Common myeloid progenitor, CD34-positive (primary cell): ENCODE measurements at regions of chr14 and their contacts with region 1.

Region 1: GRCh38 chr14:106318700-106319099 is 792.3 kb downstream of the TMEM121 start:
- DNase-seq: peak; percentile 52 to 82 (median 75)
- H3K4me3 ChIP-seq: no peak overlapping the region
- H3K27ac ChIP-seq: no peak overlapping the region
- H3K4me1 ChIP-seq: peaks cover 0 to 7% (median 3%) of the 10 kb centered on the region in 4 experiments
- H3K27me3 ChIP-seq: peaks cover 0 to 3% (median 0%) of the 10 kb centered on the region in 5 experiments

Region 2: GRCh38 chr14:106062502-106063272 is 256.0 kb before region 1 on chr14:
- CTCF ChIA-PET with region 1: no interaction called
- POLR2A ChIA-PET with region 1: no interaction called
- DNase-seq: peak; percentile 57 to 94 (median 92)
- H3K4me3 ChIP-seq: no peak overlapping the region
- H3K27ac ChIP-seq: no peak overlapping the region
- H3K4me1 ChIP-seq: peaks cover 0 to 26% (median 15%) of the 10 kb centered on the region in 4 experiments
- H3K27me3 ChIP-seq: peaks cover 0 to 17% (median 0%) of the 10 kb centered on the region in 5 experiments

Region 3: GRCh38 chr14:106134886-106135285 is 183.8 kb before region 1 on chr14:
- CTCF ChIA-PET with region 1: no interaction called
- POLR2A ChIA-PET with region 1: no interaction called
- DNase-seq: peak in 2 of 3 donors; percentile 48 to 70
- H3K4me3 ChIP-seq: no peak overlapping the region
- H3K27ac ChIP-seq: no peak overlapping the region
- H3K4me1 ChIP-seq: peaks cover 0 to 5% (median under 1%) of the 10 kb centered on the region in 4 experiments
- H3K27me3 ChIP-seq: peaks cover 0 to 16% (median 0%) of the 10 kb centered on the region in 5 experiments

Region 4: DNA sequence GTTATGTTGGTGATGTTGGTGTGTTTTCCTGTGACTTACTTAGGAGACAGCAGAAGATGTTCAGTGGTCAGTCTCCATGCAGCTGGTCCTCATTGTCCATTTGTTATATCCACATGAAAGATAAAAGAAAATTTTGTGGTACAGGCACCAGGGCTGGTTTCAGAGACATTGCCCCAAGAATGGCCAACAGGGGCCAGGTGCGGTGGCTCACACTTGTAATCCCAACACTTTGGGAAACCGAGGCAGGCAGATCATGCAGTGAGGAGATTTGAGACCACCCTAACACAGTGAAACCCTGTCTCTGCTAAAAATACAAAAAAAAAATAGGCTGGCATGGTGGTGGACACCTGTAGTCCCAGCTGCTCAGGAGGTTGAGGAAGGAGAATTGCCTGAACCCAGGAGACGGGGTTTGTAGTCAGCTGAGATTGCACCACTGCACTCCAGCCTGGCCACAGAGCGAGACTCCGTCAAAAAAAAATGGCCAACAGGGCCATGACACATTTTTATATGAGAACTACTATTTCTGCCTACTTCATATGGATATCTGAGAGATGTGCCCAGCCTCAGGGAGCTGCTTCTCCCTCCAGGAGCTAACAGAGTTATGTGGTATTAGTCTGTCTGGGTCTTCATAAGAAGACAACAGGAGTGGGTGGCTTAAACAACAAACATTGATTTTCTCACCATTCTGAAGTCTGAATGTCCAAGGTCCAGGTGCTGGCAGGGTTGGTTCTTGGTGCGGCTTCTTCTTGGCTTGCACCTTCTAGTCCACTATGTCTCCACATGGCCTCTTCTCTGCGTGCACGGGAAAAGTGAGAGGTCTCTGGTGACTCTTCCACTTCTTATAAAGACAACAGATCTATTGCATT is 29.4 kb after region 1 on chr14:
- CTCF ChIA-PET with region 1: interaction called, 17 read pairs
- POLR2A ChIA-PET with region 1: no interaction called
- DNase-seq: no peak
- H3K4me3 ChIP-seq: no peak overlapping the region
- H3K27ac ChIP-seq: no peak overlapping the region
- H3K4me1 ChIP-seq: peaks cover 0 to 24% (median 0%) of the 10 kb centered on the region in 4 experiments
- H3K27me3 ChIP-seq: peaks cover 0 to 2% (median 0%) of the 10 kb centered on the region in 5 experiments

Region 5: DNA sequence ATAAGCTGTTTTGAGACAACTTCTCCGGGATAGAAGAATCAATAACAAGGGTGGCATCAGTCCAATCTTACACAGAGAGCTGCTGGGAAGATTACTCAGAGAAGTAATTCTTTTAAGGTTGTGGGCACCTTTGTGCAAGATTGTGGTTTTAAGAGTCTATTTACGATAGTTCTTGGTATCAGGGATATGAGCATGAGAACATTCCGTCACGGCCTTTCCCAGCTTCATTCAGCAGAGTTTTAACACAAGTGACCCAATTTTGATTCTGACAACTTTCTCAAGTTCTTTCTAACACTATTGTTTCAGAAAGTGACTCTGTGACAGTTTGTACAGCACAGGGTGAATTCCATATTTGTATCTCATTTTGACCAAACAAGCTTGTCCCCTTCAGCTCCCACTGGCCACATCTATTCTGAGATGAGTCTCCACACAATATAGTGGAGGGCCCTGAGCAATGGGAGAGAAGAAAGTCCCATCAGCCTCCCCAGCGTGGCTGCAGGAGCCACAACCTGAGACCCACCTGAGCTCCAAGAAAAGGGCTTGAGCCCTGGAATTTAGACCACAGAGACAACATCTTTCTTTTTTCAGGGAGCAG is 76.9 kb after region 1 on chr14:
- CTCF ChIA-PET with region 1: no interaction called
- POLR2A ChIA-PET with region 1: no interaction called
- DNase-seq: no peak
- H3K4me3 ChIP-seq: no peak overlapping the region
- H3K27ac ChIP-seq: no peak overlapping the region
- H3K4me1 ChIP-seq: peaks cover 0 to 2% (median 0%) of the 10 kb centered on the region in 4 experiments
- H3K27me3 ChIP-seq: peaks cover 0 to 21% (median 3%) of the 10 kb centered on the region in 5 experiments